Activated CD8-positive, alpha-beta memory T cell treated with anti-CD3 and anti-CD28 coated beads, Interleukin-2, amount 10 ng/mL, durations not matched to agents 7 days and 5 days (primary cell): ENCODE measurements at regions of chr5 and their contacts with region 1.

Region 1: GRCh38 chr5:135560858-135561257 is 17.9 kb downstream of the CXCL14 start:
- DNase-seq: peak; percentile 79
- ATAC-seq: peak; percentile 73
- H3K4me3 Mint-ChIP-seq: no peak overlapping the region
- H3K27ac Mint-ChIP-seq: no peak overlapping the region
- H3K4me1 Mint-ChIP-seq: peaks cover 4% of the 10 kb centered on the region
- H3K27me3 Mint-ChIP-seq: peaks cover 41% of the 10 kb centered on the region

Region 2: GRCh38 chr5:135353952-135354721 is 206.7 kb before region 1 on chr5:
- CTCF ChIA-PET with region 1: no interaction called
- DNase-seq: no peak
- ATAC-seq: no peak
- H3K4me3 Mint-ChIP-seq: no peak overlapping the region
- H3K27ac Mint-ChIP-seq: no peak overlapping the region
- H3K4me1 Mint-ChIP-seq: peaks cover 2% of the 10 kb centered on the region
- H3K27me3 Mint-ChIP-seq: no peaks in the 10 kb centered on the region

Region 3: GRCh38 chr5:135829681-135830383 is 269.0 kb after region 1 on chr5:
- CTCF ChIA-PET with region 1: interaction called, 27 read pairs
- DNase-seq: peak; percentile 54
- ATAC-seq: no peak
- H3K4me3 Mint-ChIP-seq: no peak overlapping the region
- H3K27ac Mint-ChIP-seq: no peak overlapping the region
- H3K4me1 Mint-ChIP-seq: no peaks in the 10 kb centered on the region
- H3K27me3 Mint-ChIP-seq: peaks cover 29% of the 10 kb centered on the region